GM10248 (cell line): ENCODE measurements at regions of chr17 and their contacts with region 1.

Region 1: GRCh38 chr17:76623271-76624146 is 20.0 kb downstream of the ST6GALNAC1 start:
- DNase-seq: peak; percentile 86
- CTCF ChIP-seq: peak; percentile 95

Region 2: GRCh38 chr17:76523084-76524037 is 100.1 kb before region 1 on chr17:
- CTCF ChIA-PET with region 1: interaction called, 109 read pairs
- POLR2A ChIA-PET with region 1: no interaction called
- DNase-seq: peak; percentile 89
- CTCF ChIP-seq: peak; percentile 95

Region 3: DNA sequence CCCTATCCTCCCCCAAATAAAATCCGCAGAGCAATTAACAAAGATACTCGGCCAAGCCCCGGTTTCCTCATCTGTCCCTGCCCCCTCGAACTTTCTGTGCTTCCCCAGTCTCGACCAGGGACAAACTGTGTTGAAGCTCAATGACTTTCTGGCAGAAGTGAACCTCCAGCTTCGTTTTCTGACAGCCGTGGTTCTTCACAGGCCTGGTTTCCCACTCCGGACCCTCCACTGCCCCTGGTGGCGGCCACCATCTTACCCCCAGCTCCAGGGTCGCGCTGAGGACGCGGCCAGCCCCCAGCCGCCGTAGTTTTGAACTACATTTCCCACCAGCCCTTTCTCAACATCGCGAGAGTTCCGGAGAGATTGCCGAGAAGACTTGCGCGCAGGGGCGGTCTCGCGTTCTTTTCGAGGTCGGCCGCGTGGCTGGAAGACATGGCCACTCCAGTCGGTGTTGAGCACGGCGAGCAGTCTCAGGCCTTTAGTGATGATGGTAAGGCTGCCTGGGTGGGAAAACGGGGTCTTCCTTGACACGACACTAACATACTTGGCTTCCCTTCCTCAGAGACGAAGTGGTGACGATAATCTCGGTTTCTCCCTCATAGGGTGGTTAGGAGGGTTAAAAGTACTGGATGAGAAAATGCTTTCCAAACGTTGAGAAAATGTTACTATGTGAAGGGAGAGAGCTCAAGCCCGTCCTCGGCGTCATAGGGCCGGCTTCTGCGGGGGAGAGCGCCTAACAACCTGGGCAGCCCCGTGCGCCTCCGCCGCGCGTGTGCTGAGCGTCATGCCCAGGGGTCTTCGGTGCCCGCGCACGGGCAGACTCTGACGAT is 65.9 kb before region 1 on chr17:
- CTCF ChIA-PET with region 1: interaction called, 21 read pairs
- POLR2A ChIA-PET with region 1: no interaction called
- DNase-seq: peak; percentile 92
- CTCF ChIP-seq: peak; percentile 20

Region 4: GRCh38 chr17:76597728-76598474 is 25.6 kb before region 1 on chr17:
- CTCF ChIA-PET with region 1: interaction called, 31 read pairs
- POLR2A ChIA-PET with region 1: interaction called, 3 read pairs
- DNase-seq: no peak
- CTCF ChIP-seq: no peak

Region 5: GRCh38 chr17:76641501-76641900 is 18.0 kb after region 1 on chr17:
- CTCF ChIA-PET with region 1: interaction called, 14 read pairs
- POLR2A ChIA-PET with region 1: no interaction called
- DNase-seq: no peak
- CTCF ChIP-seq: no peak

Region 6: GRCh38 chr17:76772842-76773525 is 149.5 kb after region 1 on chr17:
- CTCF ChIA-PET with region 1: no interaction called
- POLR2A ChIA-PET with region 1: no interaction called
- DNase-seq: no peak
- CTCF ChIP-seq: no peak

Region 7: GRCh38 chr17:76887802-76888201 is 264.3 kb after region 1 on chr17:
- CTCF ChIA-PET with region 1: no interaction called
- POLR2A ChIA-PET with region 1: no interaction called
- DNase-seq: no peak
- CTCF ChIP-seq: no peak